Astrocyte of the cerebellum (primary cell): ENCODE measurements at regions of chr9 and their contacts with region 1.

Region 1: DNA sequence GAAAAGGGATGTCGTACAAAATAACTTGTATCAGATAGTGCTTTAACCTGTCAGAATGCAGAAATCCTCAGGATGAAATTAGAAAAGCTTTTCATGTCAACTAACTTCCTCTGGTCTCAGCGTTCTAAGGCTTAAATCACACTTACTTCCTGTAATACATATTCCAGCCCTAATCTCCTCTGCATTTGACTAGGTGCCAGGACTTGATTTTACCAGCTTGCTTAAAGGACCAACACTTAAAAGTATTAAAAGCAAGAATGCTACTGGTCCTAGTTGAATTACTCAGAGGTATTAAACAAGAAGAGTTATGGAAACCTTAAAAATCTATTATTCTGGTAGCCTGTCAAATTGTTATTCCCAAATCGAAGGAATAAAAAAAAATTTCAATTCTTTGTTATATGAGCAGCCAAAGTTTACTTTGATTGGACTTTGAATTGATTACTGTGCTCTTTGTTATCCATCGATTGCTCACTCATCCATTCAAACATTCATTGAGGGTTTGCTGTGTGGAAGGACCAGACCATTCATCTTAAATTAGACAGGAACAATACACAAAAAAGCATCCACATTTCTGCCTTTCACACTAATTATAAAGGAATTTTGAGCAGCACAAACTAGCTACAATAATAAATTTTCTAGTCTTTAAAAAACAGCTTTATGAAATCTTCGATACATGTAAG is 108.7 kb downstream of the MUSK start:
- DNase-seq: no peak
- H3K4me3 ChIP-seq: no peak overlapping the region
- CTCF ChIP-seq: no peak

Region 2: GRCh38 chr9:110832926-110833325 is 55.6 kb after region 1 on chr9:
- in situ Hi-C with region 1: loop called (anchors 5 kb)
- DNase-seq: no peak
- H3K4me3 ChIP-seq: no peak overlapping the region
- CTCF ChIP-seq: no peak

Region 3: GRCh38 chr9:110880189-110880588 is 102.9 kb after region 1 on chr9:
- in situ Hi-C with region 1: loop called (anchors 5 kb)
- DNase-seq: peak; percentile 81
- H3K4me3 ChIP-seq: no peak overlapping the region
- CTCF ChIP-seq: no peak